CD4-positive, alpha-beta memory T cell (primary cell): ENCODE measurements at regions of chr6 and their contacts with region 1.

Region 1: GRCh38 chr6:85678602-85679444 is 36.1 kb upstream of the SYNCRIP start:
- DNase-seq: peak; percentile 98 to 99 (median 99)
- H3K4me3 ChIP-seq: peak overlapping the region; percentile 90 to 99
- H3K4me3 Mint-ChIP-seq: peak overlapping the region; percentile 97 to 100 (median 100)
- H3K27ac ChIP-seq: peak overlapping the region; percentile 87
- H3K27ac Mint-ChIP-seq: peak overlapping the region; percentile 98 to 100 (median 99)
- H3K4me1 ChIP-seq: peaks cover 46% of the 10 kb centered on the region
- H3K4me1 Mint-ChIP-seq: peaks cover 36 to 56% (median 41%) of the 10 kb centered on the region in 4 donors
- H3K27me3 ChIP-seq: no peaks in the 10 kb centered on the region
- H3K27me3 Mint-ChIP-seq: no peaks in the 10 kb centered on the region

Region 2: GRCh38 chr6:83859410-83860358 is 1819.1 kb before region 1 on chr6 and contains the start of gene CYB5R4:
- CTCF ChIA-PET with region 1: no interaction called
- POLR2A ChIA-PET with region 1: interaction called, 3 read pairs
- intact Hi-C with region 1: loop called (anchors 1 kb)
- DNase-seq: peak; percentile 94 to 95 (median 94)
- H3K4me3 ChIP-seq: peak within 1 kb of the TSS; percentile 87 to 95
- H3K4me3 Mint-ChIP-seq: peak within 1 kb of the TSS; percentile 94 to 99 (median 98)
- H3K27ac ChIP-seq: peak within 1 kb of the TSS; percentile 79
- H3K27ac Mint-ChIP-seq: peak within 1 kb of the TSS; percentile 87 to 97 (median 95)
- H3K4me1 ChIP-seq: peaks cover 22% of the 10 kb centered on the region
- H3K4me1 Mint-ChIP-seq: peaks cover 29 to 46% (median 37%) of the 10 kb centered on the region in 4 donors
- H3K27me3 ChIP-seq: no peaks in the 10 kb centered on the region
- H3K27me3 Mint-ChIP-seq: peaks cover 9% of the 10 kb centered on the region in 2 donors
- total RNA-seq, gene CYB5R4: 24.0 to 26.2 TPM

Region 3: GRCh38 chr6:84103029-84103428 is 1575.8 kb before region 1 on chr6:
- CTCF ChIA-PET with region 1: no interaction called
- POLR2A ChIA-PET with region 1: no interaction called
- intact Hi-C with region 1: no loop called
- DNase-seq: no peak
- H3K4me3 ChIP-seq: no peak overlapping the region
- H3K4me3 Mint-ChIP-seq: no peak overlapping the region
- H3K27ac ChIP-seq: no peak overlapping the region
- H3K27ac Mint-ChIP-seq: no peak overlapping the region
- H3K4me1 ChIP-seq: no peaks in the 10 kb centered on the region
- H3K4me1 Mint-ChIP-seq: no peaks in the 10 kb centered on the region
- H3K27me3 ChIP-seq: no peaks in the 10 kb centered on the region
- H3K27me3 Mint-ChIP-seq: peaks cover 5 to 8% of the 10 kb centered on the region in 2 donors

Region 4: GRCh38 chr6:85354761-85355618 is 323.8 kb before region 1 on chr6:
- CTCF ChIA-PET with region 1: interaction called, 4 read pairs
- POLR2A ChIA-PET with region 1: interaction called, 4 read pairs
- intact Hi-C with region 1: loop called (anchors 2 kb)
- DNase-seq: peak in 4 of 5 donors; percentile 27 to 46 (median 40)
- H3K4me3 ChIP-seq: no peak overlapping the region
- H3K4me3 Mint-ChIP-seq: no peak overlapping the region
- H3K27ac ChIP-seq: no peak overlapping the region
- H3K27ac Mint-ChIP-seq: no peak overlapping the region
- H3K4me1 ChIP-seq: no peaks in the 10 kb centered on the region
- H3K4me1 Mint-ChIP-seq: no peaks in the 10 kb centered on the region
- H3K27me3 ChIP-seq: no peaks in the 10 kb centered on the region
- H3K27me3 Mint-ChIP-seq: peaks cover 2 to 5% of the 10 kb centered on the region in 2 donors

Region 5: GRCh38 chr6:85593438-85594196 is 85.2 kb before region 1 on chr6 and contains the start of gene SNX14:
- CTCF ChIA-PET with region 1: interaction called, 17 read pairs
- POLR2A ChIA-PET with region 1: interaction called, 162 read pairs
- intact Hi-C with region 1: loop called (anchors 1 kb)
- DNase-seq: peak; percentile 74 to 87 (median 78)
- H3K4me3 ChIP-seq: peak within 1 kb of the TSS; percentile 59 to 86
- H3K4me3 Mint-ChIP-seq: peak within 1 kb of the TSS; percentile 92 to 98 (median 96)
- H3K27ac ChIP-seq: peak within 1 kb of the TSS; percentile 83
- H3K27ac Mint-ChIP-seq: peak within 1 kb of the TSS; percentile 96 to 99 (median 98)
- H3K4me1 ChIP-seq: peaks cover 33% of the 10 kb centered on the region
- H3K4me1 Mint-ChIP-seq: peaks cover 29 to 56% (median 43%) of the 10 kb centered on the region in 4 donors
- H3K27me3 ChIP-seq: no peaks in the 10 kb centered on the region
- H3K27me3 Mint-ChIP-seq: no peaks in the 10 kb centered on the region
- total RNA-seq, gene SNX14: 63.0 to 70.3 TPM

Region 6: DNA sequence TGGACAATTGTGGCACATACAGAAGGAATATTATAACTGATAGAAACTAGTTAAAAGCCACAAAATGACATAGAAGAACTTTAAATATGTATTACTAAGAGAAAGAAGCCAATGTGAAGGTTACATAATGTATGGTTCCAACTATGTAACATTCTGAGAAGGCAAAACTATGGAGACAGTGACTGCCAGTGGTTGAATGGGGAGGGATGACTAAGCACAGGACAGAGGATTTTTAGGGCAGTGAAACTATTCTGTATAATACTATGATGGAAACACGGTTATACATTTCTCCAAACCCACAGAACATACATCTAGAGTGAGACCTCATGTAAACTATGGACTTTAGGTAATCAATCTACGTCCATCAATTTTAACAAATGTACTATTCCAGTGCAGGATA is 58.5 kb before region 1 on chr6:
- CTCF ChIA-PET with region 1: interaction called, 4 read pairs
- POLR2A ChIA-PET with region 1: interaction called, 3 read pairs
- intact Hi-C with region 1: loop called (anchors 10 kb)
- DNase-seq: no peak
- H3K4me3 ChIP-seq: no peak overlapping the region
- H3K4me3 Mint-ChIP-seq: no peak overlapping the region
- H3K27ac ChIP-seq: no peak overlapping the region
- H3K27ac Mint-ChIP-seq: peak overlapping the region in 5 of 7 donors; percentile 8 to 80 (median 48)
- H3K4me1 ChIP-seq: peaks cover 6% of the 10 kb centered on the region
- H3K4me1 Mint-ChIP-seq: peaks cover 24 to 28% (median 24%) of the 10 kb centered on the region in 4 donors
- H3K27me3 ChIP-seq: no peaks in the 10 kb centered on the region
- H3K27me3 Mint-ChIP-seq: no peaks in the 10 kb centered on the region

Region 7: GRCh38 chr6:85642774-85643536 is 35.9 kb before region 1 on chr6 and contains the start of gene SYNCRIP:
- CTCF ChIA-PET with region 1: interaction called, 129 read pairs
- POLR2A ChIA-PET with region 1: interaction called, 1,033 read pairs
- intact Hi-C with region 1: loop called (anchors 1 kb)
- DNase-seq: peak; percentile 97 to 99 (median 99)
- H3K4me3 ChIP-seq: peak within 1 kb of the TSS; percentile 82 to 98
- H3K4me3 Mint-ChIP-seq: peak within 1 kb of the TSS; percentile 92 to 98 (median 94)
- H3K27ac ChIP-seq: peak within 1 kb of the TSS; percentile 96
- H3K27ac Mint-ChIP-seq: peak within 1 kb of the TSS; percentile 98 to 100 (median 99)
- H3K4me1 ChIP-seq: peaks cover 43% of the 10 kb centered on the region
- H3K4me1 Mint-ChIP-seq: peaks cover 38 to 65% (median 47%) of the 10 kb centered on the region in 4 donors
- H3K27me3 ChIP-seq: no peaks in the 10 kb centered on the region
- H3K27me3 Mint-ChIP-seq: peaks cover 0 to 2% of the 10 kb centered on the region in 2 donors
- total RNA-seq, gene SYNCRIP: 81.4 to 84.3 TPM

Region 8: DNA sequence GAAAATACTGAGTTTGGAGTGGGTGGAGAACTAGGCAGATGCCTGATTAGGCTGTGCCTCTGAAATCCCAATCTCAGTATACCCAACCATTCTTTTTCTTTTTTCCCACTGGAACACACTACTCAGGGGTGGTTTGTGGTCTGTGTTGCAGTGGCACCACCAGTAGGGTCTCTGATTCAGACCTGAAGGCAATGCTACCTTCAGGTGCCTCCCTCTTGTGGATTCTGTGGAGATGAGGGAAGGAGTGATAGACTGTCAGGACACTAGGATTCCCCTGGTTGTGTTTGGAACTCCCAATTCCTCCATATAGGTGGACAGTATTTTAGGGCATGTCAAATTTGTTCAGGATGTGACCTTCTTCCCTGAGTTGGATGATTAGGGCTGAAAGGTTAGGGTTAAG is 11.2 kb after region 1 on chr6:
- CTCF ChIA-PET with region 1: no interaction called
- POLR2A ChIA-PET with region 1: interaction called, 11 read pairs
- intact Hi-C with region 1: no loop called
- DNase-seq: no peak
- H3K4me3 ChIP-seq: no peak overlapping the region
- H3K4me3 Mint-ChIP-seq: no peak overlapping the region
- H3K27ac ChIP-seq: no peak overlapping the region
- H3K27ac Mint-ChIP-seq: no peak overlapping the region
- H3K4me1 ChIP-seq: no peaks in the 10 kb centered on the region
- H3K4me1 Mint-ChIP-seq: peaks cover 0 to 2% (median 0%) of the 10 kb centered on the region in 4 donors
- H3K27me3 ChIP-seq: no peaks in the 10 kb centered on the region
- H3K27me3 Mint-ChIP-seq: peaks cover 0 to 3% of the 10 kb centered on the region in 2 donors